Gastrocnemius medialis (tissue), 4 donors: ENCODE measurements at regions of chr20 and their contacts with region 1.

Region 1: GRCh38 chr20:3156811-3157619 is 2.6 kb downstream of the FASTKD5 start:
- DNase-seq: no peak
- ATAC-seq: no peak
- H3K4me3 ChIP-seq: peak overlapping the region; percentile 8 to 98 (median 90)
- H3K27ac ChIP-seq: peak overlapping the region; percentile 63 to 96 (median 92)
- H3K4me1 ChIP-seq: peaks cover 61 to 62% of the 10 kb centered on the region in 2 donors
- H3K27me3 ChIP-seq: no peaks in the 10 kb centered on the region
- CTCF ChIP-seq: no peak
- POLR2A ChIP-seq: no peak

Region 2: DNA sequence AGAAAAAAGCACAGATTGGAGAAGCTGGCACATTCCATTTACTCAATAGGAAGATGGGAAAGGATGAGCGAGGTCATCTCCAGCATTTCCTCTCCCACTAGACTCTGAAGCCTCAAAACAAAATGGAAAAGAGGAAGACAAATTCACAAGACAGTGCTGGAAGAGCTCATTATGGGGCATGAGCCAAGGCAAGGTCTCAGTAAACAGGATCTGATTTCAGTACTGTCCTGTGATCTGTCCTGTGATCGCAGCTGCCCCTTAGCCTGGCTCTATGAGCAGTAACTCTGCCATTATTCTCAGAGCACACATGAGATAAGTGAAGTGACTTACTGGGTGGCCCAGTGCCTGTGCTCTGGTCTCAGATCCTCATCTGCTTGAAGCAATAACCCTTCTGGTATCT is 150.1 kb after region 1 on chr20:
- in situ Hi-C with region 1: no loop called
- intact Hi-C with region 1: loop called (anchors 5 kb)
- DNase-seq: peak; percentile 82 to 85
- ATAC-seq: peak; percentile 83 to 85
- H3K4me3 ChIP-seq: peak overlapping the region; percentile 50 to 62 (median 57)
- H3K27ac ChIP-seq: peak overlapping the region; percentile 89 to 95 (median 92)
- H3K4me1 ChIP-seq: peaks cover 49 to 72% of the 10 kb centered on the region in 2 donors
- H3K27me3 ChIP-seq: no peaks in the 10 kb centered on the region
- CTCF ChIP-seq: no peak
- POLR2A ChIP-seq: peak; percentile 58 to 86